ENCODE measurements at regions of chr3 and their contacts with region 1.

Region 1: DNA sequence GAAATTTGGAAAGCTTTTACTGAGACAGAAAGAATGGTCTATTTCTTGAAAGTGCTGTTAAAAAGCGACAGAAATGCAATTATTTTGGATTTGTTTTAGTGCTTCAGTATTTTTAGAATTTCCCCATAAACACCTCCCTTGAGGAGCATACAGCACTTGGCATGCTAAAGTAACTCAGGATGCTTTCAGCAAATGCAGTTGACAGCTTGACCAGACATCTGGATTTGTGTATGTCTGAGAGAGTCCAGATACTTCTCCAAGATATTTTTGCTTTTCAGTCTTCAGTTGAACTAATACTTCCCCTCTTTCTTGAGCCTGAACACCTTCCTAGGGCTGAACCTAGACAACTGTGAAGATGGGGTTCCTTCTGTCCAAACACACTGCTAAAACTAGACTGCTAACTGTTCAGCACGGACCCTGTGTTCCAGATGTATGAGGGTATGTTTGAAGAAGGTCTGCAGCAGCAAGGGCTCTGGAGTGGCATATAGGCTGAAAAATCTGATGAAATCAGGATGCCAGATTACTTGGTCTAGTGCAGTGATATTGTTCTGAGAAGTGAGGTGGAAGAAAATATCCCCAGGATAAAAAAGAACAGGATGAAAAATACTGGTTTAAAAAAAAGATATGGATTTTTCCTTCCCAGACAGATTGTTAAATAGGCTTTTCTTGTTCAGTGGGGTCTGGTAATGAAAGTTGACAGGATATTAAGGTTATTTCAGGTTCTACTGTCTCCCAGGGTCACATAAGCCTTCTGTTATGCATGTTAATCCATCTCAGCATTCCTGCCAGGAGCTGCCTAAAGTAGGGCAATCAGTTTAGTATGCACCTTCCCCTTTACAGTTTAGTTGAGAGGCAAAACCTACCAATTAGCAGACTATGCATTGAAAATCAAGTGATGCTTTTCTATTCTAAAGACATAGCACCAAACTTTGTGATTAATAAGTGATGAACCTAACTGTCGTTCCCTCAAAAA is 516.9 kb upstream of the TBL1XR1 start:
- DNase-seq: no peak
- ATAC-seq: peak in 1 of 4 donors; percentile 61
- H3K4me3 ChIP-seq: no peak overlapping the region
- H3K27ac ChIP-seq: peak overlapping the region in 2 of 12 donors; percentile 5 to 31
- H3K4me1 ChIP-seq: peaks cover 0 to 23% (median 12%) of the 10 kb centered on the region in 12 donors
- H3K27me3 ChIP-seq: no peaks in the 10 kb centered on the region
- CTCF ChIP-seq: no peak
- POLR2A ChIP-seq: no peak

Region 2: DNA sequence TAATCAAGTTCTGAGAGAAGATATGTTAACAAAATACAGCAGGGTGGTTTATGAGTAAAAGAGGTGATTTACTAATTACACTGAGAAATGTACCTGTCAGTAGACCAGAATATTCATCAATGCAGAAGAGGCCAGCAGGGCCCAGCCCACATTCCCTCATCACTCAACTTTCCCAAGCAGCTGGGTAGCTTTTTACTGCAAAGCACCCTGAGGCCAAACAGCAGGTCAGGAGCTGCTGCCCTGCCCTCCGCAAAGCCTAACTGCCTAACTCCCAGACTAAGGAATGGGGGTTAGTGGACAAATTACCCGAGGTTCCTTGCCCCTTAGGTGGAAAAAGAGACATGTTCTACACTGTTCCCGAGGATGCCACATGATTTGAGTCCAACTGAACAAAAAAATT is 625.1 kb before region 1 on chr3:
- intact Hi-C with region 1: no loop called
- DNase-seq: no peak
- ATAC-seq: peak in 1 of 4 donors; percentile 24
- H3K4me3 ChIP-seq: no peak overlapping the region
- H3K27ac ChIP-seq: peak overlapping the region in 2 of 12 donors; percentile 10 to 18
- H3K4me1 ChIP-seq: peaks cover 0 to 57% (median 46%) of the 10 kb centered on the region in 12 donors
- H3K27me3 ChIP-seq: no peaks in the 10 kb centered on the region
- CTCF ChIP-seq: no peak
- POLR2A ChIP-seq: no peak

Region 3: GRCh38 chr3:177483182-177483967 is 230.8 kb before region 1 on chr3:
- intact Hi-C with region 1: loop called in 1 of 10 experiments (anchors 10 kb)
- DNase-seq: no peak
- ATAC-seq: no peak
- H3K4me3 ChIP-seq: no peak overlapping the region
- H3K27ac ChIP-seq: no peak overlapping the region
- H3K4me1 ChIP-seq: peaks cover 0 to 18% (median 5%) of the 10 kb centered on the region in 12 donors
- H3K27me3 ChIP-seq: no peaks in the 10 kb centered on the region
- CTCF ChIP-seq: peak in 2 of 12 donors; percentile 5 to 26
- POLR2A ChIP-seq: no peak

Region 4: DNA sequence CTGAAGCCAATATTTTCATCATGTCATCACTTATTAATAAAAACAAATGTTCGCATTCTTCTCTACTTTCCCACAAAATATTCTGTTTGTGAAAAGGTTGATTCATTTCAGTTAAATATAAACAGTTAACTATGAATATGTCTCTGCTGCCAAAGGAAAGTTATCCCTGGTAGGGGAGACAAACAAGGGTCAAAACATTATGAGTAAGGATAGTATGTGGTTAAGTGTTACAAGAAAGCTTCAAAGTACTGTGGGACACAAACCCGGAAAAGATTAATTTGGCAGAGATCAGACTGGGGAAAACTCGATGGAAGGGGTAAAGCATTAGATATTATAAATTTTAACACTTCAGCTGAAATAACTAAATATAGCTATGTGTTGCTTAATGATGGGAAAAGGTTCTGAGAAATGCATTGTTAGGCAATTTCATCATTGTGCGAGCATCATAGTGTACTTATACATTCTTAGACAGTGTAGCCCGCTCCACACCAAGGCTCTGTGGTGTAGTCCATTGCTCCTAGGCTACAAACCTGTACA is 80.5 kb before region 1 on chr3:
- intact Hi-C with region 1: no loop called
- DNase-seq: no peak
- ATAC-seq: peak in 2 of 4 donors; percentile 33 to 34
- H3K4me3 ChIP-seq: no peak overlapping the region
- H3K27ac ChIP-seq: no peak overlapping the region
- H3K4me1 ChIP-seq: peaks cover 0 to 12% (median 0%) of the 10 kb centered on the region in 12 donors
- H3K27me3 ChIP-seq: no peaks in the 10 kb centered on the region
- CTCF ChIP-seq: no peak
- POLR2A ChIP-seq: no peak

Region 5: GRCh38 chr3:177906126-177906511 is 191.9 kb after region 1 on chr3:
- intact Hi-C with region 1: loop called in 1 of 10 experiments (anchors 10 kb)
- DNase-seq: no peak
- ATAC-seq: peak; percentile 45 to 88 (median 75)
- H3K4me3 ChIP-seq: no peak overlapping the region
- H3K27ac ChIP-seq: peak overlapping the region in 8 of 12 donors; percentile 7 to 73 (median 60)
- H3K4me1 ChIP-seq: peaks cover 0 to 31% (median 12%) of the 10 kb centered on the region in 12 donors
- H3K27me3 ChIP-seq: no peaks in the 10 kb centered on the region
- CTCF ChIP-seq: peak in 1 of 12 donors; percentile 6
- POLR2A ChIP-seq: no peak

Measured in heart left ventricle (tissue), 16 donors.